Activated CD8-positive, alpha-beta T cell treated with anti-CD3 and anti-CD28 coated beads for 36 hours (primary cell): ENCODE measurements at regions of chr10 and their contacts with region 1.

Region 1: GRCh38 chr10:43390759-43391158 is 18.2 kb downstream of the HNRNPF start:
- DNase-seq: peak; percentile 30
- ATAC-seq: peak; percentile 50
- H3K4me3 Mint-ChIP-seq: no peak overlapping the region
- H3K27ac Mint-ChIP-seq: peak overlapping the region; percentile 79
- H3K4me1 Mint-ChIP-seq: peaks cover 77% of the 10 kb centered on the region
- H3K27me3 Mint-ChIP-seq: no peaks in the 10 kb centered on the region
- CTCF ChIP-seq: no peak

Region 2: DNA sequence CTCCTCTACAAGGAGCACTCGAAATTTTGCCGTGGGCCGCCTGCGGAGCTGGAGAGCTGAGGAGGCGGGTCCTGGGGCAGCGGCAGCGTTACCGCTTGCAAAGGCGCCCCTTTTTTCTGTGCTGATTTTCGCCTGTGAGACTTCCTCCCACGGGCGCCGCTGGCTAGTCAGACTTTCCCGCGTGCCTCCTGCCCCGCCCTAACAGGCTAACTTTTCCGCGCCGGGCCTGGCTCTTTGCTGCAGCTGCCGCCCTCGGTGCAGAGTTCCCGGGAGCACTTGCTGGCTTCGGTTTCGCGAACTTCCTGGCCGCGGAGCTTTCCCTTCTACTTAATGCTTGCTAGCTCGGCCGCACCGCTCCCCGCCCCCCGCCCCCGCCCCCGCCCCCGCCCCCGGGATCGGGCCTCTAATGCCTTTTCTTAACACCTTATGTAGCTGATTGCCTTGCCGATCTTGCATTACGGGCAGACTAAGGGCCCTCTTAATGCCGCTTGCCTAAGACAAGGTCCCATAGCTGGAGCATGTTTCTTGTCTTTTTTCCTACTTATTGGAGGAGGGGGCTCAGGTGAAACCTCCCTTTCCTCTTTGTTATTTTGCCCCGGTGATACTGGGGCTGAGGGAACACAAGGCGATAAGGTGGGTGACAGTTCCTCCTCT is 85.9 kb before region 1 on chr10:
- CTCF ChIA-PET with region 1: no interaction called
- POLR2A ChIA-PET with region 1: no interaction called
- intact Hi-C with region 1: no loop called
- DNase-seq: peak; percentile 78
- ATAC-seq: peak; percentile 48
- H3K4me3 Mint-ChIP-seq: peak overlapping the region; percentile 59
- H3K27ac Mint-ChIP-seq: no peak overlapping the region
- H3K4me1 Mint-ChIP-seq: peaks cover 45% of the 10 kb centered on the region
- H3K27me3 Mint-ChIP-seq: peaks cover 18% of the 10 kb centered on the region
- CTCF ChIP-seq: no peak

Region 3: DNA sequence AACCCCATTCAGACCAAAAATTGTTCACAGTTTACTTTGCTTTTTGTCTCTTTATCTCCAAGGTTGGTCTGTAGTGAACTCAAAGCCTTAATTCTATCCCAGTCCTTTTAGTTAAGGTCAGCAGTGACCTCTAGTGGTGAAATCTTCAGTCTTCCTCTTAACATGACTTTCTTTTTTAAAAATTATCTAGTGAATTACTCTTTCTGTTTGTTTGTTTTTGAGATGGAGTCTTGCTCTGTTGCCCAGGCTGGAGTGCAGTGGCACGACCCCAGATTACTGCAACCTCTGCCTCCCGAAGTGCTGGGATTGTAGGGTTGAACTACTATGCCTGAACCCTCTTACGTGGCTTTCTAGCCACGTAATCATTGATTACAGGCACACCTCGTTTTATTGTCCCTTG is 71.2 kb after region 1 on chr10:
- CTCF ChIA-PET with region 1: interaction called, 10 read pairs
- POLR2A ChIA-PET with region 1: interaction called, 6 read pairs
- intact Hi-C with region 1: no loop called
- DNase-seq: peak; percentile 38
- ATAC-seq: peak; percentile 82
- H3K4me3 Mint-ChIP-seq: no peak overlapping the region
- H3K27ac Mint-ChIP-seq: no peak overlapping the region
- H3K4me1 Mint-ChIP-seq: peaks cover 5% of the 10 kb centered on the region
- H3K27me3 Mint-ChIP-seq: no peaks in the 10 kb centered on the region
- CTCF ChIP-seq: peak; percentile 75